HepG2 (cell line): ENCODE measurements at regions of chrX and their contacts with region 1.

Region 1: GRCh38 chrX:64093761-64094160 is 111.7 kb downstream of the AMER1 start:
- DNase-seq: no peak
- ATAC-seq: no peak
- H3K4me3 ChIP-seq: no peak overlapping the region
- H3K27ac ChIP-seq: no peak overlapping the region
- H3K4me1 ChIP-seq: no peaks in the 10 kb centered on the region
- H3K27me3 ChIP-seq: no peaks in the 10 kb centered on the region
- CTCF ChIP-seq: peak; percentile 45
- EP300 ChIP-seq: no peak
- POLR2A ChIP-seq: no peak
- RAD21 ChIP-seq: no peak

Region 2: DNA sequence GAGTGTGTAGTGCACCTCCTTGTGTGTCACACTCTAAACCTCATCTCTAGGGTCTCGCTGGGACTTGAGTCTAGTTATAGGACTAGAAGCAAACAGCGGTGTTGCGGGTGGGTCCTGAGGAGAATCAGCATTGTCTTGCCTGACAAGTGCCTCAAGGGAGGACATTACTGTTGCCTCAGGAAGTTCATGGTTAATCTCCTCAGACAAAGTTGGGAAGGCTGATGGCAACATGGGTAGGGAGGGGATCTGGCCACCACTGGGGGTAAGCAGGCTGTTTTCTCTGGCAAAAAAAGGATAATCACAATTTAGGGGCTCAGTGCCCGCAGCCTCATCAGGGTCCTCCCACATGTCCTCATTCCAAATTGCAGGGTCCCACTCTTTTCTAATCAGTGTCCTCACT is 124.3 kb after region 1 on chrX:
- CTCF ChIA-PET with region 1: no interaction called
- POLR2A ChIA-PET with region 1: no interaction called
- in situ Hi-C with region 1: no loop called
- intact Hi-C with region 1: loop called (anchors 1 kb)
- DNase-seq: no peak
- ATAC-seq: no peak
- H3K4me3 ChIP-seq: no peak overlapping the region
- H3K27ac ChIP-seq: no peak overlapping the region
- H3K4me1 ChIP-seq: no peaks in the 10 kb centered on the region
- H3K27me3 ChIP-seq: no peaks in the 10 kb centered on the region
- CTCF ChIP-seq: no peak
- EP300 ChIP-seq: no peak
- POLR2A ChIP-seq: no peak
- RAD21 ChIP-seq: no peak